Heart left ventricle (tissue), 16 donors: ENCODE measurements at regions of chr2 and their contacts with region 1.

Region 1: DNA sequence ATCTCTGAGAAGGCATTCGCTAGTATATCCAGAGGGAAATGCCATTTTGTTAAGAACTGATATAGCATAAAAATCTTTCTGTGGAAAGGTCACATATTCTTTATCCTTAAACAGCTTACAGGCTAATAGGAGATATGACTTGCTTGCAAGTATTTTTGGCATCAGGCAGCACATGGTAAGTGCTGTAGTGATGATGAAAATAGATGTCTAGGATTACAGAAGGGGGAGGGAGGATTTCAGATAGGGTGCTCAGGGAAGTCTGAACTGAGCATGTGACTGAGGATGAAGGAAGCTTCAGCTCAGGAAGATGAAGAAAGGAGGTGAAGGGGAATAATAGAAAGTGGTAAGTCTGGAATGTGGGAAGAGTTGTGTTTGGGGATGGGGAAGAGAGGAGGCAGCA is 158.5 kb upstream of the NOSTRIN start:
- DNase-seq: peak in 1 of 5 donors; percentile 22
- ATAC-seq: peak; percentile 52 to 82 (median 66)
- H3K4me3 ChIP-seq: peak overlapping the region in 1 of 12 donors; percentile 16
- H3K27ac ChIP-seq: peak overlapping the region; percentile 36 to 85 (median 64)
- H3K4me1 ChIP-seq: peaks cover 0 to 43% (median 18%) of the 10 kb centered on the region in 12 donors
- H3K27me3 ChIP-seq: no peaks in the 10 kb centered on the region
- CTCF ChIP-seq: no peak
- POLR2A ChIP-seq: no peak

Region 2: DNA sequence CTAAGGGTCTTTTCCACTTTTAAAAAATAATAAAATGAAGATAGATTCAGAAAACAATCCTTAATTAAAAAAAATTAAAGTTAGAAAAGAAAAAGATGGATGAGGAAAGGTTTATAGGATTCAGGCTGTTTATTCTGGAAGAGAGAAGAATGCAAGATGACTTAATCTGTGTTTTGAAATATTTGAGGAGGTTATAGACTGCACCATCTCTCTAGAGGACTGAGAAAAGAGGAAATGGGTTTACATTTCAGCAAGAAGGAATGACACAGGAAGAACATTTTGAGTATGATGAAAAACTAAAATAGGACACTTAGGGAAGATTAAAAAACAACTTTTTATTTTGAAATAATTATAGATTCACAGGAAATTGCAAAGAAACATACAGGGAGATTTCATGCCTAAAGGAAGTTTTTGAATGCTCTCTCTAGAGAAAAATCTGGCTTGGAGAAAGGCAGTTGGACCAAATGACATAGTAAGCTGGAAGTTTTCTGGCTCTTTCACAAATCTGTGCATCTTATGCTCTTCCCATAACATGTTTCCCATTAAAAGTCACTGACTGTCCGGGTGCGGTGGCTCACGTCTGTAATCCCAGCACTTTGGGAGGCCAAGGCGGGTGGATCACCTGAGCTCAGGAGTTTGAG is 112.9 kb before region 1 on chr2:
- intact Hi-C with region 1: loop called in 4 of 10 experiments (anchors 5 to 10 kb)
- DNase-seq: no peak
- ATAC-seq: peak in 1 of 4 donors; percentile 32
- H3K4me3 ChIP-seq: no peak overlapping the region
- H3K27ac ChIP-seq: peak overlapping the region in 11 of 12 donors; percentile 56 to 84 (median 77)
- H3K4me1 ChIP-seq: peaks cover 7 to 84% (median 37%) of the 10 kb centered on the region in 12 donors
- H3K27me3 ChIP-seq: no peaks in the 10 kb centered on the region
- CTCF ChIP-seq: no peak
- POLR2A ChIP-seq: no peak

Region 3: DNA sequence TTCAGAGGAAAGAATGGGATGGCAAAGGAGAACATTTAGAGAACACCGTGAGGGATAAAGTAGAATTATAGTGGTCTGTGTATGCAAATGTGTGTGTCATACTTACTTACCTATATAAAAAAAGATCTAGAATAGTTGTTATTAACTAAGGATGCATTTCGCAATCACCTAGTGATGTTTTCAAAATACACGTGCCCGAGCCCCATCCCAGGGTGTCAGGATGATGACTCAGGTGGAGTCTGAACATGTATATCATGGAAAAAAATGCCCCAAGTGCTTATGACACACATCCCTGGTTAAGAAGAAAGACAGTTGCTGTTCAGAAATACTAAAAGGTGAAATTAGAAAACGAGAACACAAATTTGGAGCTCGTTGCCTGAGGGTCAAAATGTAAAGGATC is 78.9 kb before region 1 on chr2:
- intact Hi-C with region 1: loop called in 2 of 10 experiments (anchors 5 kb)
- DNase-seq: no peak
- ATAC-seq: no peak
- H3K4me3 ChIP-seq: no peak overlapping the region
- H3K27ac ChIP-seq: peak overlapping the region in 4 of 12 donors; percentile 2 to 30 (median 14)
- H3K4me1 ChIP-seq: peaks cover 0 to 62% (median 39%) of the 10 kb centered on the region in 12 donors
- H3K27me3 ChIP-seq: no peaks in the 10 kb centered on the region
- CTCF ChIP-seq: no peak
- POLR2A ChIP-seq: no peak